Naive thymus-derived CD4-positive, alpha-beta T cell (primary cell): ENCODE measurements at regions of chr11 and their contacts with region 1.

Region 1: GRCh38 chr11:47383071-47383470 is 4.7 kb upstream of the SPI1 start:
- DNase-seq: no peak
- ATAC-seq: no peak
- H3K4me3 ChIP-seq: no peak overlapping the region
- H3K4me3 Mint-ChIP-seq: no peak overlapping the region
- H3K27ac ChIP-seq: no peak overlapping the region
- H3K27ac Mint-ChIP-seq: no peak overlapping the region
- H3K4me1 ChIP-seq: no peaks in the 10 kb centered on the region
- H3K4me1 Mint-ChIP-seq: peaks cover 0 to 15% (median 3%) of the 10 kb centered on the region in 7 donors
- H3K27me3 ChIP-seq: no peaks in the 10 kb centered on the region
- H3K27me3 Mint-ChIP-seq: no peaks in the 10 kb centered on the region

Region 2: GRCh38 chr11:46874586-46874985 is 508.5 kb before region 1 on chr11:
- CTCF ChIA-PET with region 1: no interaction called
- POLR2A ChIA-PET with region 1: no interaction called
- intact Hi-C with region 1: no loop called
- DNase-seq: no peak
- ATAC-seq: no peak
- H3K4me3 ChIP-seq: no peak overlapping the region
- H3K4me3 Mint-ChIP-seq: no peak overlapping the region
- H3K27ac ChIP-seq: no peak overlapping the region
- H3K27ac Mint-ChIP-seq: no peak overlapping the region
- H3K4me1 ChIP-seq: no peaks in the 10 kb centered on the region
- H3K4me1 Mint-ChIP-seq: no peaks in the 10 kb centered on the region
- H3K27me3 ChIP-seq: no peaks in the 10 kb centered on the region
- H3K27me3 Mint-ChIP-seq: peaks cover 0 to 8% (median 0%) of the 10 kb centered on the region in 5 donors

Region 3: GRCh38 chr11:47285969-47286770 is 96.9 kb before region 1 on chr11:
- CTCF ChIA-PET with region 1: no interaction called
- POLR2A ChIA-PET with region 1: no interaction called
- intact Hi-C with region 1: no loop called
- DNase-seq: no peak
- ATAC-seq: no peak
- H3K4me3 ChIP-seq: no peak overlapping the region
- H3K4me3 Mint-ChIP-seq: no peak overlapping the region
- H3K27ac ChIP-seq: no peak overlapping the region
- H3K27ac Mint-ChIP-seq: peak overlapping the region in 2 of 9 donors; percentile 22 to 43
- H3K4me1 ChIP-seq: no peaks in the 10 kb centered on the region
- H3K4me1 Mint-ChIP-seq: peaks cover 0 to 5% (median 0%) of the 10 kb centered on the region in 7 donors
- H3K27me3 ChIP-seq: no peaks in the 10 kb centered on the region
- H3K27me3 Mint-ChIP-seq: no peaks in the 10 kb centered on the region

Region 4: GRCh38 chr11:47394322-47395222 is 11.5 kb after region 1 on chr11:
- CTCF ChIA-PET with region 1: interaction called, 3 read pairs
- POLR2A ChIA-PET with region 1: interaction called, 10 read pairs
- intact Hi-C with region 1: no loop called
- DNase-seq: peak in 6 of 9 donors; percentile 32 to 61 (median 46)
- ATAC-seq: peak; percentile 67
- H3K4me3 ChIP-seq: peak overlapping the region; percentile 70
- H3K4me3 Mint-ChIP-seq: peak overlapping the region; percentile 52 to 77 (median 72)
- H3K27ac ChIP-seq: peak overlapping the region; percentile 81
- H3K27ac Mint-ChIP-seq: peak overlapping the region; percentile 85 to 96 (median 92)
- H3K4me1 ChIP-seq: peaks cover 26 to 41% of the 10 kb centered on the region in 2 donors
- H3K4me1 Mint-ChIP-seq: peaks cover 16 to 65% (median 54%) of the 10 kb centered on the region in 7 donors
- H3K27me3 ChIP-seq: no peaks in the 10 kb centered on the region
- H3K27me3 Mint-ChIP-seq: no peaks in the 10 kb centered on the region